CD4-positive, alpha-beta T cell (primary cell): ENCODE measurements at regions of chr1 and their contacts with region 1.

Region 1: DNA sequence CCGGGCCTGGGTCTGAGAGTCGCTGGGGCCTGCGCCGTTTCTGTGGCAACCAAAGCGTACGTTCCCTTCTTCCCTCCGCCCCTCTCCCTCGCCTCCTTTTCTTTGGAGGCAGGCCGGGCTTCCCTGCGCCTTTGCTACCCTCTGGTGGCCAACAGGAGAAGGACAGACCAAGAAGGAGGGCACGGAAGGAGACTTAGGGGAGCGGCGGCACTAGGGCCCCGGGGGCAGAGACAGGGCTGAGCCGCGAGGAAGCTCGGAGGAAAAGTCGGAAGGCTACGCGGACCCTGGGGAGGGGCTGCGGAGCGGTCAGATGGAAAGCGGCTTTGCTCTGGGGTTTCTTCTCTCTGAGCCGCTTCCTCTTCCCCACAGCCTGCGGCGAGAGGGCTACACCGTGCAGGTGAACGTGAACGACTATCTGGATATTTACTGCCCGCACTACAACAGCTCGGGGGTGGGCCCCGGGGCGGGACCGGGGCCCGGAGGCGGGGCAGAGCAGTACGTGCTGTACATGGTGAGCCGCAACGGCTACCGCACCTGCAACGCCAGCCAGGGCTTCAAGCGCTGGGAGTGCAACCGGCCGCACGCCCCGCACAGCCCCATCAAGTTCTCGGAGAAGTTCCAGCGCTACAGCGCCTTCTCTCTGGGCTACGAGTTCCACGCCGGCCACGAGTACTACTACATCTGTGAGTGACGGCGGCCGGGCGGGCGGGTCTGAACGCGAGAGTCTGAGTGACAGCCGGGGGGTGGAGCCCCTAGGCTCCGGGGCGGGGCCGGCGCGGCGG is 6.3 kb downstream of the EFNA3 start:
- DNase-seq: peak; percentile 80 to 95 (median 88)
- ATAC-seq: peak; percentile 75
- H3K4me3 ChIP-seq: peak overlapping the region; percentile 92
- H3K4me3 Mint-ChIP-seq: peak overlapping the region; percentile 89
- H3K27ac ChIP-seq: peak overlapping the region; percentile 65 to 68
- H3K27ac Mint-ChIP-seq: peak overlapping the region; percentile 82
- H3K4me1 ChIP-seq: peaks cover 67% of the 10 kb centered on the region
- H3K4me1 Mint-ChIP-seq: peaks cover 51% of the 10 kb centered on the region
- H3K27me3 ChIP-seq: peaks cover 41 to 46% of the 10 kb centered on the region in 2 experiments
- H3K27me3 Mint-ChIP-seq: peaks cover 36% of the 10 kb centered on the region
- CTCF ChIP-seq: peak; percentile 76

Region 2: GRCh38 chr1:154479764-154480421 is 605.0 kb before region 1 on chr1:
- CTCF ChIA-PET with region 1: interaction called, 4 read pairs
- POLR2A ChIA-PET with region 1: no interaction called
- intact Hi-C with region 1: loop called in 1 of 2 experiments (anchors 5 kb)
- DNase-seq: peak in 13 of 14 experiments; percentile 23 to 84 (median 43)
- ATAC-seq: peak; percentile 91
- H3K4me3 ChIP-seq: no peak overlapping the region
- H3K4me3 Mint-ChIP-seq: no peak overlapping the region
- H3K27ac ChIP-seq: no peak overlapping the region
- H3K27ac Mint-ChIP-seq: no peak overlapping the region
- H3K4me1 ChIP-seq: peaks cover 7% of the 10 kb centered on the region
- H3K4me1 Mint-ChIP-seq: peaks cover 20% of the 10 kb centered on the region
- H3K27me3 ChIP-seq: no peaks in the 10 kb centered on the region
- H3K27me3 Mint-ChIP-seq: no peaks in the 10 kb centered on the region
- CTCF ChIP-seq: peak; percentile 90

Region 3: GRCh38 chr1:154878371-154879022 is 206.4 kb before region 1 on chr1:
- CTCF ChIA-PET with region 1: no interaction called
- POLR2A ChIA-PET with region 1: no interaction called
- intact Hi-C with region 1: no loop called
- DNase-seq: peak; percentile 54 to 82 (median 64)
- ATAC-seq: peak; percentile 91
- H3K4me3 ChIP-seq: no peak overlapping the region
- H3K4me3 Mint-ChIP-seq: no peak overlapping the region
- H3K27ac ChIP-seq: no peak overlapping the region
- H3K27ac Mint-ChIP-seq: no peak overlapping the region
- H3K4me1 ChIP-seq: no peaks in the 10 kb centered on the region
- H3K4me1 Mint-ChIP-seq: no peaks in the 10 kb centered on the region
- H3K27me3 ChIP-seq: no peaks in the 10 kb centered on the region
- H3K27me3 Mint-ChIP-seq: peaks cover 5% of the 10 kb centered on the region
- CTCF ChIP-seq: peak; percentile 91

Region 4: DNA sequence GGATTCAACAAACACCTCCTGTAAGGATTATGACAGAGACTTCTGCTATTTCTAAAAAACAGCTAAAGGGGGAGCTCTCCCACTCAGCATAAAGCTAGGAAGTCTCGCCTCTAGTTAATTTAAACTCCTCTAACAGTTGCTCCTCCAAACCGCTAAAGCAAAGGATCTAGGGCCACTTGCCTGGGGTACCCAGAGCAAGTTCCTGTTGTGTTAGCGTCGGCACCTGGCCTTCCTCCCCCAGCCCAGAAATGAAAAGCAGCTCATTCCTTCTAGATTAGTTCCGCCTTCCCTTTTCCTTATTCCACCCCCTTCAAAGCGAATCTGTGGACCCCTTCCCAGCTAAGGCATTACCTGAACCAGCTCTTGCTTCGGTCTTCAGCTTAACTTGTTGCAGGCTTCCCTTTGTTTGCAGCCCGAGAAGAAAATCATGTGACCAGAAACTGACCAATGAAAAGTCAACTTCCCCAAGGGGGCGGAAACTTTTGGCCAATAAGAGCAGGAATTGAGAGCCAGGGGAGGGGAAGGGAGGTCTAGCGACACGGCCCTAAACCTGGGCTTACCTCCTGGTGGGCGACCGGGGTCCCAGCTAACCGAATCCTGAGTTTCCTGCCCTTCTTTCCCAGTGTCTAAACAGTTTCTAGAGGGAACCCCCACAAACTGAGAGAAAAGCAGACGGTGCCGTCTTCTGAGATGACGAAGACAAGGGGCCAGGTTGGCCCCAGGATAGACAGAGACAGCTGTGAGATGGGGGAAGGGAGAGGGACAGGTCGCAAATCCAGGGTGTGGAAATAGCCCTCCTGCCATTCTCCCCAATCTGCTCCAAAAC is 129.0 kb before region 1 on chr1 and contains the start of gene PBXIP1:
- CTCF ChIA-PET with region 1: interaction called, 9 read pairs
- POLR2A ChIA-PET with region 1: interaction called, 6 read pairs
- intact Hi-C with region 1: loop called in 1 of 2 experiments (anchors 10 kb)
- DNase-seq: peak; percentile 64 to 95 (median 78)
- ATAC-seq: peak; percentile 40
- H3K4me3 ChIP-seq: peak within 1 kb of the TSS; percentile 69
- H3K4me3 Mint-ChIP-seq: peak within 1 kb of the TSS; percentile 95
- H3K27ac ChIP-seq: peak within 1 kb of the TSS; percentile 100
- H3K27ac Mint-ChIP-seq: peak within 1 kb of the TSS; percentile 96
- H3K4me1 ChIP-seq: peaks cover 96% of the 10 kb centered on the region
- H3K4me1 Mint-ChIP-seq: peaks cover 57% of the 10 kb centered on the region
- H3K27me3 ChIP-seq: no peaks in the 10 kb centered on the region
- H3K27me3 Mint-ChIP-seq: no peaks in the 10 kb centered on the region
- CTCF ChIP-seq: peak; percentile 40
- total RNA-seq, gene PBXIP1: 434 to 440 TPM

Region 5: GRCh38 chr1:155050560-155051341 is 34.2 kb before region 1 on chr1 and contains the start of gene ADAM15:
- CTCF ChIA-PET with region 1: interaction called, 12 read pairs
- POLR2A ChIA-PET with region 1: interaction called, 9 read pairs
- intact Hi-C with region 1: loop called (anchors 1 kb)
- DNase-seq: peak; percentile 63 to 91 (median 74)
- ATAC-seq: peak; percentile 81
- H3K4me3 ChIP-seq: peak within 1 kb of the TSS; percentile 87
- H3K4me3 Mint-ChIP-seq: peak within 1 kb of the TSS; percentile 91
- H3K27ac ChIP-seq: peak within 1 kb of the TSS; percentile 55 to 61
- H3K27ac Mint-ChIP-seq: peak within 1 kb of the TSS; percentile 55
- H3K4me1 ChIP-seq: peaks cover 33% of the 10 kb centered on the region
- H3K4me1 Mint-ChIP-seq: peaks cover 26% of the 10 kb centered on the region
- H3K27me3 ChIP-seq: no peaks in the 10 kb centered on the region
- H3K27me3 Mint-ChIP-seq: no peaks in the 10 kb centered on the region
- CTCF ChIP-seq: peak; percentile 95
- total RNA-seq, gene ADAM15: 17.2 to 20.1 TPM

Region 6: GRCh38 chr1:155070721-155071569 is 14.0 kb before region 1 on chr1:
- CTCF ChIA-PET with region 1: interaction called, 14 read pairs
- POLR2A ChIA-PET with region 1: interaction called, 11 read pairs
- intact Hi-C with region 1: loop called in 1 of 2 experiments (anchors 2 kb)
- DNase-seq: peak; percentile 63 to 92 (median 78)
- ATAC-seq: peak; percentile 99
- H3K4me3 ChIP-seq: peak overlapping the region; percentile 49
- H3K4me3 Mint-ChIP-seq: peak overlapping the region; percentile 44
- H3K27ac ChIP-seq: no peak overlapping the region
- H3K27ac Mint-ChIP-seq: no peak overlapping the region
- H3K4me1 ChIP-seq: peaks cover 29% of the 10 kb centered on the region
- H3K4me1 Mint-ChIP-seq: peaks cover 30% of the 10 kb centered on the region
- H3K27me3 ChIP-seq: no peaks in the 10 kb centered on the region
- H3K27me3 Mint-ChIP-seq: no peaks in the 10 kb centered on the region
- CTCF ChIP-seq: peak; percentile 42

Region 7: GRCh38 chr1:155172732-155173477 is 88.0 kb after region 1 on chr1 and contains the start of gene KRTCAP2:
- CTCF ChIA-PET with region 1: interaction called, 10 read pairs
- POLR2A ChIA-PET with region 1: interaction called, 17 read pairs
- intact Hi-C with region 1: no loop called
- DNase-seq: peak; percentile 90 to 97 (median 92)
- ATAC-seq: peak; percentile 80
- H3K4me3 ChIP-seq: peak within 1 kb of the TSS; percentile 77
- H3K4me3 Mint-ChIP-seq: peak within 1 kb of the TSS; percentile 100
- H3K27ac ChIP-seq: peak within 1 kb of the TSS; percentile 89 to 91
- H3K27ac Mint-ChIP-seq: peak within 1 kb of the TSS; percentile 95
- H3K4me1 ChIP-seq: peaks cover 58% of the 10 kb centered on the region
- H3K4me1 Mint-ChIP-seq: peaks cover 55% of the 10 kb centered on the region
- H3K27me3 ChIP-seq: no peaks in the 10 kb centered on the region
- H3K27me3 Mint-ChIP-seq: no peaks in the 10 kb centered on the region
- CTCF ChIP-seq: peak; percentile 84
- total RNA-seq, gene KRTCAP2: 77.8 TPM

Region 8: DNA sequence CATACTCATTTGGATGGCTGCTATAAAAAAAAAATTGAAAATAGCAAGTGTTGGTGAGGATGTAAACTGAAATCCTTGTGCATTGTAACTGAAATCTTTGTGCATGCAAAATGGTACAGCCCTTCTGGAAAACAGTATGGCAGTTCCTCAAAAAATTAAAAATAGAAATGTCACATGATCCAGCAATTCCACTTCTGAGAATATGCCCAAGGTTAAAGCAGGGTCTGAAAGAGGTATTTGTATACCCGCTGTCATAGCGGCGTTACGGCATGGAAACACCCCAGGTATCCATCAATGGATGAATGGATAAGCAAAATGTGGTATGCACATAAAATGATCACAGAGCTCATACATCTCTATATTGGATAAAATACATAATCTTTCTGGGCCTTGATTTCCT is 352.5 kb after region 1 on chr1:
- CTCF ChIA-PET with region 1: no interaction called
- POLR2A ChIA-PET with region 1: no interaction called
- intact Hi-C with region 1: no loop called
- DNase-seq: no peak
- ATAC-seq: no peak
- H3K4me3 ChIP-seq: no peak overlapping the region
- H3K4me3 Mint-ChIP-seq: no peak overlapping the region
- H3K27ac ChIP-seq: no peak overlapping the region
- H3K27ac Mint-ChIP-seq: no peak overlapping the region
- H3K4me1 ChIP-seq: no peaks in the 10 kb centered on the region
- H3K4me1 Mint-ChIP-seq: no peaks in the 10 kb centered on the region
- H3K27me3 ChIP-seq: no peaks in the 10 kb centered on the region
- H3K27me3 Mint-ChIP-seq: no peaks in the 10 kb centered on the region
- CTCF ChIP-seq: no peak

Region 9: GRCh38 chr1:155717041-155717440 is 632.1 kb after region 1 on chr1:
- CTCF ChIA-PET with region 1: no interaction called
- POLR2A ChIA-PET with region 1: no interaction called
- intact Hi-C with region 1: no loop called
- DNase-seq: no peak
- ATAC-seq: no peak
- H3K4me3 ChIP-seq: no peak overlapping the region
- H3K4me3 Mint-ChIP-seq: no peak overlapping the region
- H3K27ac ChIP-seq: no peak overlapping the region
- H3K27ac Mint-ChIP-seq: no peak overlapping the region
- H3K4me1 ChIP-seq: peaks cover 4% of the 10 kb centered on the region
- H3K4me1 Mint-ChIP-seq: peaks cover 10% of the 10 kb centered on the region
- H3K27me3 ChIP-seq: no peaks in the 10 kb centered on the region
- H3K27me3 Mint-ChIP-seq: no peaks in the 10 kb centered on the region
- CTCF ChIP-seq: no peak